ENCODE measurements at regions of chr20 and their contacts with region 1.

Region 1: GRCh38 chr20:21571841-21572690 is 58.2 kb upstream of the NKX2-2 start:
- DNase-seq: peak; percentile 23
- ATAC-seq: no peak
- H3K4me3 ChIP-seq: no peak overlapping the region
- H3K4me3 Mint-ChIP-seq: no peak overlapping the region
- H3K27ac ChIP-seq: no peak overlapping the region
- H3K27ac Mint-ChIP-seq: no peak overlapping the region
- H3K4me1 ChIP-seq: no peaks in the 10 kb centered on the region
- H3K4me1 Mint-ChIP-seq: no peaks in the 10 kb centered on the region
- H3K27me3 ChIP-seq: peaks cover 0 to 18% (median 2%) of the 10 kb centered on the region in 4 experiments
- H3K27me3 Mint-ChIP-seq: peaks cover 22% of the 10 kb centered on the region
- CTCF ChIP-seq: peak; percentile 95

Region 2: GRCh38 chr20:21156266-21156665 is 415.8 kb before region 1 on chr20:
- CTCF ChIA-PET with region 1: no interaction called
- POLR2A ChIA-PET with region 1: no interaction called
- intact Hi-C with region 1: no loop called
- DNase-seq: no peak
- ATAC-seq: no peak
- H3K4me3 ChIP-seq: no peak overlapping the region
- H3K4me3 Mint-ChIP-seq: no peak overlapping the region
- H3K27ac ChIP-seq: no peak overlapping the region
- H3K27ac Mint-ChIP-seq: no peak overlapping the region
- H3K4me1 ChIP-seq: no peaks in the 10 kb centered on the region
- H3K4me1 Mint-ChIP-seq: no peaks in the 10 kb centered on the region
- H3K27me3 ChIP-seq: no peaks in the 10 kb centered on the region
- H3K27me3 Mint-ChIP-seq: no peaks in the 10 kb centered on the region
- CTCF ChIP-seq: no peak

Region 3: GRCh38 chr20:21424846-21425245 is 147.2 kb before region 1 on chr20:
- CTCF ChIA-PET with region 1: no interaction called
- POLR2A ChIA-PET with region 1: no interaction called
- intact Hi-C with region 1: no loop called
- DNase-seq: no peak
- ATAC-seq: no peak
- H3K4me3 ChIP-seq: no peak overlapping the region
- H3K4me3 Mint-ChIP-seq: no peak overlapping the region
- H3K27ac ChIP-seq: no peak overlapping the region
- H3K27ac Mint-ChIP-seq: no peak overlapping the region
- H3K4me1 ChIP-seq: no peaks in the 10 kb centered on the region
- H3K4me1 Mint-ChIP-seq: no peaks in the 10 kb centered on the region
- H3K27me3 ChIP-seq: peaks cover 0 to 2% (median 0%) of the 10 kb centered on the region in 4 experiments
- H3K27me3 Mint-ChIP-seq: peaks cover 13% of the 10 kb centered on the region
- CTCF ChIP-seq: no peak

Region 4: DNA sequence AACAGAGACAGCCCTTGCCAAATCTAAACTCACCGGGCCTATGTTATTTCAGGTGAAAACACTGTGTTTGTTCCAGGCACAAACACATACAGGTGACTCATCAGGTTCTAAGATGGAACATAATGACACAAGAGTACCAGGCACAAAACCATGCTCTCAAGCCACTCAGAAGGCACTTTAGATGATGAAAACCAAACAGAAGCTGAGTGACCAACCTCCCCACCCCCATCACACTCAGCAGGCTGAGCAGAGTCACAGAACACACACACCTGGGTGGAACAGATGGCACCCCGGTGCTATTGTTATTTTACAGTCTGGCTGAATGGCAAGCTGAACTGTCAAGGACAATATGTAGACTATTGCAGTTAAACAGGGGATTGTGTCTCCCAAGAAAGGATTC is 37.6 kb before region 1 on chr20:
- CTCF ChIA-PET with region 1: no interaction called
- POLR2A ChIA-PET with region 1: no interaction called
- intact Hi-C with region 1: no loop called
- DNase-seq: no peak
- ATAC-seq: no peak
- H3K4me3 ChIP-seq: no peak overlapping the region
- H3K4me3 Mint-ChIP-seq: no peak overlapping the region
- H3K27ac ChIP-seq: no peak overlapping the region
- H3K27ac Mint-ChIP-seq: no peak overlapping the region
- H3K4me1 ChIP-seq: no peaks in the 10 kb centered on the region
- H3K4me1 Mint-ChIP-seq: no peaks in the 10 kb centered on the region
- H3K27me3 ChIP-seq: peaks cover 0 to 4% (median 0%) of the 10 kb centered on the region in 4 experiments
- H3K27me3 Mint-ChIP-seq: peaks cover 40% of the 10 kb centered on the region
- CTCF ChIP-seq: no peak

Region 5: DNA sequence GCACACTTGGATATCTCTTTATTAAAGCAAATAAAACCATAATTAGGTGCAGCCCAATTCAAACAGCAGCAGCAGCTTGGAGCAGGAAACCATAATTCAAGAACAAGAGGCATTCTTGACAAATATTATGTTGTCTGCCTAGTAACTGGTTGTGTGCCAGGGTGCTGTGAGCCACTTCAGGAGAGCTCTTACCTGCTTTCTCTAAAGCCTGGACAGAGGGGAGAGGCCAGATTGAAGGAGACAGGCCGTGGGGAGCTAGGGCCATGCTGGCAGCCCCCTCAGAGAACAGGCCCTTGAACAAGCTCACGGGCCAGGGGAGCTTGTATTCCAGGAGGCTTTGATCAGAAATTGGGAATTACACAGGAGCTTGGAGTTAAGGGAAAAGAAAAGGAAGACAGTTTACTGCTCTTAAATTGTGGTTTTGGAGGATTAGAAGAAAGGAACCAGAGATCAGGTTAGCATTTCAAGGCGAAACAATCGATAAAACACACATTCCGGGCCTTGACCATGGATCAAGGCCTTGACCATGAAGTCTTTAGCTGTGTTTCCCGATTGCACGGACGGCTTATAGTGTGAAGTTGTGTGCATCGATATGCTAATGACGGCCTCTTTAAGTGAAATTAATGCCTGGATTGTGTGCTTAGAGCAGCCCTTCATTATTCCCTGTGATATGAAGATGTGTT is 11.6 kb after region 1 on chr20:
- CTCF ChIA-PET with region 1: interaction called, 16 read pairs
- POLR2A ChIA-PET with region 1: no interaction called
- intact Hi-C with region 1: no loop called
- DNase-seq: no peak
- ATAC-seq: no peak
- H3K4me3 ChIP-seq: no peak overlapping the region
- H3K4me3 Mint-ChIP-seq: no peak overlapping the region
- H3K27ac ChIP-seq: no peak overlapping the region
- H3K27ac Mint-ChIP-seq: no peak overlapping the region
- H3K4me1 ChIP-seq: no peaks in the 10 kb centered on the region
- H3K4me1 Mint-ChIP-seq: no peaks in the 10 kb centered on the region
- H3K27me3 ChIP-seq: peaks cover 0 to 4% (median 1%) of the 10 kb centered on the region in 4 experiments
- H3K27me3 Mint-ChIP-seq: peaks cover 28% of the 10 kb centered on the region
- CTCF ChIP-seq: no peak